Dorsolateral prefrontal cortex (tissue), 120 donors: ENCODE measurements at regions of chr19 and their contacts with region 1.

Region 1: DNA sequence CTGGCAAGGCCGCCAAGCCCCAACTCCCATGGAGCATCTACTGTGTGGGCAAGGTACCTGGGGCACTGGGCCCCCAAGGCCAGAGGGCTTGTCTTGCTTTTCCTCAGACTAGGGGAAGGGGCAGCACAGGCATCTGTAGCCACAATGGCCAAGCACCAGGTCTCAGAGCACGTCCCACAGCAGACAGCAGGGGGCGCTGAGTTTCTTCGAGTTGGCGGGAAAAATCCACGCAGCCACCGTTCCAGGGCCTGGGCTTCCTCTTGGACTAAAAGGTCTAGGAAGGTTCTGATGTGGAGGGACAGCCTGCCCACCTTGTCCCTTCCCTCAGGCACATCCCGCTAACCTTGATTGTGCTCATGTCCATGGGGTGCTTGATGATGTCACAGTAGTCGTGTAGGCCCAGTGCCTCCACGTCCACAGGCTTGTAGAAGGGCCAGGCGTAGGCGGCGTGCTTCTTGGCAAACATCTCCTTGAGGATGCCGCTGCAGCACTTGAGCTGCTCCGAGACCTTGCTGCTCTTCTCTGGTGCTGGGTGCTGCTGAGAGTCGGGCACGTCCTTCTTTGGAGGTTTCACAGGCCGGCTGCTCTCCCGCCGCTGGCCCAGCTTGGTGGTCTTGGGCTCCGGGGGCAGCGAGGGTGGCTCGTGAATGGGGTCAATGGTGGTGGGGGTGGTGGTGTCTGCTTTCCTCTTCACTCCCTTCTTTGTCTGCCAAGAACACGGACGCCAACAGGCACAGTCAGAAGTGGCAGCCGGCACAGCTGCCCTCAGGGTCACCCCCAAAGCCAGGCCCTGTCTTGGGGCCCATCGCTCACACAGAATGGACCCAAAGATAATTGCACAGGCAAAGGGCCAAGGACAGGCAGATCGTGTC is 32.0 kb upstream of the EPHX3 start:
- DNase-seq: peak; percentile 69 to 81 (median 78)
- H3K4me3 ChIP-seq: peak overlapping the region in 11 of 59 donors; percentile 1 to 25 (median 10)
- H3K27ac ChIP-seq: peak overlapping the region in 54 of 59 donors; percentile 3 to 91 (median 75)
- H3K27me3 ChIP-seq: no peaks in the 10 kb centered on the region
- CTCF ChIP-seq: peak; percentile 65 to 95 (median 86)

Region 2: DNA sequence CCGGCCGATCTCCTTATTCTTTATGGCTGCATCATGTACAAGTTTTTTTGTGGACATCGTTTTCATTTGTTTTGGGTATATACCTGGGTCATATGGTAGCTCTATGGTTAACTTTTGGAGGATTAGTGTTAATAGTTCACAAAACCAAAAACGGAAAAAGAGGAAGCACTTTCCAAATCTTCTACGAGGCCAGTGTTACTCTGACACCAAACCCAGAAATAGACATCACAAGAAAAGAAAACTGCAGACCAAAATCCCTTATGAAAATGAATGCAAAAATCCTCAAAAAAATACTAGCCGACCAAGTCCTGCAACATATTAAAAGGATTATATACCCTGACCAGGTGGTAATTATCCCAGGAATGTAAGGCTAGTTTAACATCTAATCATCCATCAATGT is 515.7 kb before region 1 on chr19:
- intact Hi-C with region 1: no loop called
- DNase-seq: no peak
- H3K4me3 ChIP-seq: no peak overlapping the region
- H3K27ac ChIP-seq: no peak overlapping the region
- H3K27me3 ChIP-seq: no peaks in the 10 kb centered on the region
- CTCF ChIP-seq: no peak

Region 3: DNA sequence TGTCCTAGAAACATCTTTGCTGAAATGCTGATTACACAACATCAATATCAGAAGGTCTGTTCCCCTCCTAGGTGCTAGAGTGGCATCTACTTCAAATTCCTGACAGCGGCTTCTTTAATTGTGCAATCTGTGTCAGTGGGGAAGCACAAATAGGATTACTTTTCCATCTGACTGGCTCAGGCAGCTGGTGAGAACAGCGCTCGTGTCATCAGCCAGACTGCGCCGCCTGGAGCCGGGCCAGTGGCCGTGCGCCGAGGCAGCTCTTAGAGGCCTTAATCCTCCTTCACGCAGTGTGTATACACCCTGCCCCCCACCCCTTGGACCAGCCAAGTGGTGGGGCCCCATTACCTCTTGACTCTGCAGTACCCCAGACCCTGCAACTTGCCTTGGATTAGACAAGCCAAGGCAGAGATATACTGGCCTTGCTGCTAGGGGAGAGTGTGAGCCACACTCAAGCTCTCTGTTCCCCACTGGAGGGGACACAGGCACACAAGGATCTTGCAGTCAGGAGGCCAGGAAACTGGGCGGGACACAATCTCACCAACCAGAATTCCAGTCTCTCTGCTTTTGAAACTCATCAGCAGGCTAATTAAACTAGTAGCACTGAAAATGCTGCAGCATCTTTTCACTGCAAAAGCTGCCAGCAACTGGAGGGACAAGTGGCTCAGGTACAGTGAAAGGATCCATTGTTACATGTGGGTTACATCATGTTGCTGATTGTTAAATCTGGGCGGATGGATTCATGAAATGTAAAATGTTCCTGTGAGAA is 16.8 kb after region 1 on chr19:
- intact Hi-C with region 1: loop called in 1 of 2 experiments (anchors 2 kb)
- DNase-seq: peak; percentile 80 to 91 (median 88)
- H3K4me3 ChIP-seq: peak overlapping the region in 27 of 59 donors; percentile 1 to 40 (median 15)
- H3K27ac ChIP-seq: peak overlapping the region in 53 of 59 donors; percentile 0 to 87 (median 60)
- H3K27me3 ChIP-seq: no peaks in the 10 kb centered on the region
- CTCF ChIP-seq: peak in 51 of 56 donors; percentile 2 to 62 (median 39)

Region 4: GRCh38 chr19:15288146-15288963 is 24.1 kb after region 1 on chr19:
- intact Hi-C with region 1: loop called in 1 of 2 experiments (anchors 1 kb)
- DNase-seq: peak; percentile 76 to 94 (median 90)
- H3K4me3 ChIP-seq: peak overlapping the region in 38 of 59 donors; percentile 1 to 48 (median 21)
- H3K27ac ChIP-seq: peak overlapping the region in 53 of 59 donors; percentile 4 to 80 (median 53)
- H3K27me3 ChIP-seq: no peaks in the 10 kb centered on the region
- CTCF ChIP-seq: peak in 35 of 56 donors; percentile 7 to 55 (median 32)

Region 5: DNA sequence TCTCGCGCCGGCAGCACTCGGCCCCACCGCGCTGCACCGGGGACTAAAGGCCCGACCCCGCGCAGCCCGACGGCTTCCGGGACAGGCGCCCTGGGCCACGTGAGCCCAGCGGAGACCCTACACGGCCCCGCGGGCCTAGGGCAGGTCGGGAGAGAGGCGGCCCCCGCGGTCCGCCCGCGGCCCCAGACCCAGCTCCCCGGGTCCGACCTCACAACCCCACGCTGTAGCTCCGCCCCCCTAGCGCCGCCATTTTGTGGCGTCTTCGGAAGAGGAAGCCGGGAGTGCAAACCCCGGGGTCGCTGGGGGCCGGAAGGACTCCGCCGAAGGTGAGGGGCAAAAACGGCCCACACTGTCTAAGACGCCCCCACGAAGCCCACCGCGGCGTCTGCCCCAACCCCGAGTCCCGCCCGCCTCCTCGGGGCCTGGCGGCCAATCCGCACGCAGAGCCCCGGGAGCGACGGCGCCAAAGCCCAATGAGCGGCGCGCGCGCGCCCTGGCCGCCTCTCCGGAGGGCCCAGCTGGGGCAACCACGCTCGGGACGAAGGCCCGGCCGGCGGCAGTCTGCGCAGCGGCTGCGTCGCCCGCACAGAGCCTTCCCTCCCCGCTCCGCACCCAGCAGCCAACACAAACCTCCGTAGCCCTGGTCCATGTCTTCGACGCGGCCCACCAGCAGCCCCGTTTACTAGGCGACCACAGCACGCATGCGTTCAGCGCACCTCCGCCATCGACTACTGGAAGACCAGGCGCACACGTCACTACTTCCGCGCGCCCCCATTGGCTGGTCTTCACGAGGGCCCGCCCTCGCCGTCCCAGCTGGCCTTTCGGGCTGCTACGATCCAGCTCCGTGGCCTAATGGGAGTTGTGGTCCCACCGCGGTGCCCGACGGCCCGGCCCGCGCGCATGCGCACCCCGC is 115.0 kb after region 1 on chr19 and contains the start of gene AKAP8:
- intact Hi-C with region 1: loop called (anchors 2 to 5 kb)
- DNase-seq: peak; percentile 96 to 99 (median 98)
- H3K4me3 ChIP-seq: peak within 1 kb of the TSS; percentile 52 to 100 (median 96)
- H3K27ac ChIP-seq: peak within 1 kb of the TSS; percentile 71 to 99 (median 96)
- H3K27me3 ChIP-seq: no peaks in the 10 kb centered on the region
- CTCF ChIP-seq: peak in 7 of 56 donors; percentile 8 to 50 (median 28)
- total RNA-seq, gene AKAP8: 18.6 to 51.6 (median 29.6) TPM

Region 6: DNA sequence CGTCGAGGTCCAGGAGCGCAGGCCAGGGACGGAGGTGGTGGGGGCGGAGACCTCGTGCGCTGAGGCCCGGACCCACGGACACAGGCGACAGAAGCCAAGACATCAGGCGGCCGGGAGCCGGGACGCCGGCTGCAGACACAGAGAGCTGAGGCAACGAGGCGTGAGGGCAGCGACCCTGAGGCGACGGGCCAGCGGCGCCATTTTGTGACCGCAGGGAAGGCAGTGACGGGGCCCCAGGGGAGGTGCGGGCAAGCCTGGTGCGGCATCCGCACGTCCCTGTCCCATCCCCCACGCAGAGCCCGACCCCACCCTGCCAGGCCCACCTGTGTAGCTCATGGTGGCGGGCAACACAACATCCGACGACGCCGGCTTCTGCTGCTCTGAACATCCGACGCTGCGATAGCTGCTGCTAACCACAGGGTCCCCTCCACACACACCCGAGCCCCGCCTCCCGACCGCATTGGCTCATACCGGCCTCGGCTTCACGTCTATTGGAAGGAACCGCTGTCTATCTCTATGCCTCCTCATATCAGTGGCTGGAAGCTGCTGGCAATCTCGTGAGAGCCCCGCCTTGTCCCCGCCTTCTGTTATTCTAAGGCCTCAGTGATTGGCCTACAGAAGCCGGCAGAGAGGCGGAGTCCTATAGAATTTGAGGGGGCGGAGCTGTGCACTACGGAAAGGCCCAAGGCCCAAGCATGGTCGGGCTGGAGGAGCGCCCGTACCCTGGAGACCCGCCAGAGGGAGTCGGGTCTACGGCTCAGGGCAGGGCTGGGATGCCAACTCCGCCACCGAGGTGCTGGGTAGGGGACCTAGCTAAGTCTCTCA is 154.5 kb after region 1 on chr19 and contains the start of gene AKAP8L:
- intact Hi-C with region 1: loop called (anchors 2 to 5 kb)
- DNase-seq: peak; percentile 91 to 99 (median 98)
- H3K4me3 ChIP-seq: peak within 1 kb of the TSS; percentile 73 to 100 (median 98)
- H3K27ac ChIP-seq: peak within 1 kb of the TSS; percentile 0 to 97 (median 89)
- H3K27me3 ChIP-seq: no peaks in the 10 kb centered on the region
- CTCF ChIP-seq: peak in 53 of 56 donors; percentile 29 to 69 (median 52)
- total RNA-seq, gene AKAP8L: 104 to 260 (median 142) TPM